PC-9 (cell line): ENCODE measurements at regions of chrX and their contacts with region 1.

Region 1: GRCh38 chrX:154378782-154379591 is at the start of gene EMD:
- DNase-seq: peak; percentile 86 to 100
- H3K4me3 ChIP-seq: peak within 1 kb of the TSS; percentile 57
- H3K27ac ChIP-seq: peak within 1 kb of the TSS; percentile 61
- H3K4me1 ChIP-seq: no peaks in the 10 kb centered on the region
- H3K27me3 ChIP-seq: no peaks in the 10 kb centered on the region
- CTCF ChIP-seq: no peak
- total RNA-seq, gene EMD: 132 and 164 TPM in 2 replicates

Region 2: GRCh38 chrX:153885968-153886903 is 492.8 kb before region 1 on chrX and contains the start of gene L1CAM:
- CTCF ChIA-PET with region 1: no interaction called
- POLR2A ChIA-PET with region 1: no interaction called
- intact Hi-C with region 1: no loop called
- DNase-seq: no peak
- H3K4me3 ChIP-seq: no peak within 1 kb of the TSS
- H3K27ac ChIP-seq: no peak within 1 kb of the TSS
- H3K4me1 ChIP-seq: 0 out of 2 replicates have a peak, but pooled peaks cover 12% of the 10 kb centered on the region
- H3K27me3 ChIP-seq: peaks cover 11% of the 10 kb centered on the region
- CTCF ChIP-seq: no peak
- total RNA-seq, gene L1CAM: 68.8 and 79.0 TPM in 2 replicates

Region 3: GRCh38 chrX:153927922-153928760 is 450.8 kb before region 1 on chrX:
- CTCF ChIA-PET with region 1: no interaction called
- POLR2A ChIA-PET with region 1: interaction called, 10 read pairs
- intact Hi-C with region 1: no loop called
- DNase-seq: peak; percentile 92 to 99
- H3K4me3 ChIP-seq: peak overlapping the region; percentile 86
- H3K27ac ChIP-seq: peak overlapping the region; percentile 86
- H3K4me1 ChIP-seq: peaks cover 17% of the 10 kb centered on the region; the same call in 1 of the 2 replicates
- H3K27me3 ChIP-seq: no peaks in the 10 kb centered on the region
- CTCF ChIP-seq: no peak; the same call in 1 of the 2 replicates

Region 4: DNA sequence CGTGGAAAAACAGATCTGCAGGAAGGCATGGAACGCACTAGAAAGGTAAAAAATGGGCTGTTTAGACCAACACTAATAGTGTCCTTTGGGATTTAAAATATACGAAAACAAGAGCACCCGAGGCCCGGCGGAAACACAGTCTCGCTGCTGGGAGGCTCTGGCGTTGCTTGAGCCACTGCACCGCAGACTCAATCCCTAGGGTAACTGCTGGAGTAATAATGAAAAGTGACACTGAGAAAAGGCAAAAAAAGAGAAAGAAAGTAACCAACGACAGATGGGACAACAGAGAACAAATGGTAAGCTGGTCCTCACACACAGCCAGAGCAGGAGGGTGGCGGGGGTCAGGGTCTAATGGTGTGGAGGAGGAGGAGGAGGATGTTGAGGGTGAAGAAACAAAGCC is 374.7 kb before region 1 on chrX:
- CTCF ChIA-PET with region 1: no interaction called
- POLR2A ChIA-PET with region 1: no interaction called
- intact Hi-C with region 1: no loop called
- DNase-seq: no peak
- H3K4me3 ChIP-seq: no peak overlapping the region
- H3K27ac ChIP-seq: no peak overlapping the region
- H3K4me1 ChIP-seq: peaks cover 15% of the 10 kb centered on the region
- H3K27me3 ChIP-seq: no peaks in the 10 kb centered on the region
- CTCF ChIP-seq: no peak

Region 5: DNA sequence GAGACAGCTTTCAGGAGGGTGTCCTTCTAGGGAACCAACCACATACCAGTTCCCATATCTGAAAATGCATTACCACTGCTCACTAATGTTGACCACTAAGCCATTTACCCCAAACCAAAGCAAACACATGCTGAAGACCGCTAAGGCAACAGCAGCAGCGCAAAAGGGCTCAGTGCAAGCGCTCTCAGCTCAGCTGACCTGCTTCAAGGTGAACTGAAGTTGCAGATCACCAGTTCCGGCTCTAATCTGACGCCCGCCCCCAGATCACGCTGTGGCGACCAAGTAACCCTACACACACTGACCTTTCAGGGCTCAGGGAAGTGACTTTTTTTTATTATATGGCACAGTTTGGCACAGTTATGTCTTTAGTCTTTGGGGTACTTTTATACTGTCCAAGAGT is 287.3 kb before region 1 on chrX:
- CTCF ChIA-PET with region 1: no interaction called
- POLR2A ChIA-PET with region 1: no interaction called
- intact Hi-C with region 1: no loop called
- DNase-seq: no peak
- H3K4me3 ChIP-seq: no peak overlapping the region
- H3K27ac ChIP-seq: no peak overlapping the region
- H3K4me1 ChIP-seq: 0 out of 2 replicates have a peak, but pooled peaks cover 17% of the 10 kb centered on the region
- H3K27me3 ChIP-seq: no peaks in the 10 kb centered on the region
- CTCF ChIP-seq: no peak

Region 6: GRCh38 chrX:154348114-154348531 is 30.9 kb before region 1 on chrX:
- CTCF ChIA-PET with region 1: no interaction called
- POLR2A ChIA-PET with region 1: interaction called, 12 read pairs
- intact Hi-C with region 1: no loop called
- DNase-seq: peak in 1 of 2 experiments; percentile 19
- H3K4me3 ChIP-seq: no peak overlapping the region
- H3K27ac ChIP-seq: no peak overlapping the region
- H3K4me1 ChIP-seq: no peaks in the 10 kb centered on the region
- H3K27me3 ChIP-seq: no peaks in the 10 kb centered on the region
- CTCF ChIP-seq: no peak

Region 7: DNA sequence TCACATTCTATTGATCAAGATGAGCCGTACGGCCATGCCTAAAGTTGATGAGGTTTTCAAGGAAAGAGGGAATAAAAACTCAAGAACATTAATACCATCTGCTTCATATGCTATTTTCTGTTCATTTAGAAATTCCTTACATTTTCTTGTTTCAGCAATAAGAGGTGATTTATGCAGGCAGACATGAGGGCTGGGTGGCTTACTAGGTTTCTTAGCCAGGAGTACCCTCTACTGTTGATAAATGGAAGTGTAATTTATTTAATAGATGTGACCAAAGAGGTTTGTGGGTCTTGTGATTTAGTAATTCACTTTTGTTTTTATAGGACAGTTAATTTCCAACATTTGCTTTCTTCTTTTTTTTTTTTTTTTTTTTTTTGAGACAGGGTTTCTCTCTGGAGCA is 461.9 kb after region 1 on chrX:
- CTCF ChIA-PET with region 1: no interaction called
- POLR2A ChIA-PET with region 1: no interaction called
- intact Hi-C with region 1: loop called (anchors 10 kb)
- DNase-seq: peak; percentile 0 to 42
- H3K4me3 ChIP-seq: no peak overlapping the region
- H3K27ac ChIP-seq: no peak overlapping the region
- H3K4me1 ChIP-seq: no peaks in the 10 kb centered on the region
- H3K27me3 ChIP-seq: no peaks in the 10 kb centered on the region
- CTCF ChIP-seq: peak; percentile 78